A549 (cell line): ENCODE measurements at regions of chr10 and their contacts with region 1.

Region 1: DNA sequence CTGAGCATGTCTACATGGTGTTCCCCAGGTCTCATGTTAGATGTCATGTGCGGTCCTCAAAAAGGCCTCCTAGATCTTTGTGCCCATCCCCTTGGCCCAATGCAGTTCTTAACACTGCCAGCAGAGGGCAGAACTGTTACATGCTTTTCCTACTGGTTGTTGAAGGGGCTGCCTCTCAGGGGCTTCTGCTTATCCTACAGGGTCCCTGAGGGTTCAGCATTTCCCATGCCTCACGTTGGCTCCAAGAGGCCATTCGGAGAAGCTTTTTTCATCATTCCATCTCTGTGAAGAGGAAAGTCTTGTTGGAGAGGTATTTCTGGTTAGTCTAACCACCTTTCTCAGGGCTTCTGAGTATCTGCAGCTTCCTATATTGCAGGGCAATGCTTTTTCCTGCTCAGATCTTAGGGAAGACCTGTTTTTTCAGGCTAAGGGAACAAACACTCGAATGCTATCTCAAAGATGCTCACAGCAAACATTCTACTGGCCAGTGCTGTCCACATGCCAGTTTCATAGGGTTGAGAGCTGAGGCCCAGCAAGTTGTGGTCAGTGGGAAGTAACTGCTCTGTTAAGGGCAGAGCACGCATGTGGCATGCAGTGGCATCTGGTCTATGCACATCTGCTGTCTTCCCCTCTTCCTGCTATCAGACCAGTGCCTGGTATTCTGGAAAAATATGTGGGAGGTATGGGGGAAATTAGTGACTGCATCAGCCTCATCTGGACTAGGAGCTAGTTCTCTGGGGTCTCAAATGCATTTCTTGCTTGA is 31.5 kb downstream of the MBL2 start:
- DNase-seq: peak; percentile 37 to 44
- ATAC-seq: peak; percentile 72 to 86; a peak in 3 of 6 replicates
- H3K4me3 ChIP-seq: no peak overlapping the region
- H3K27ac ChIP-seq: no peak overlapping the region
- H3K4me1 ChIP-seq: no peaks in the 10 kb centered on the region
- CTCF ChIP-seq: peak; percentile 57
- EP300 ChIP-seq: no peak
- POLR2A ChIP-seq: no peak
- RAD21 ChIP-seq: peak; percentile 41 to 56; a peak in 3 of 5 replicates

Region 2: DNA sequence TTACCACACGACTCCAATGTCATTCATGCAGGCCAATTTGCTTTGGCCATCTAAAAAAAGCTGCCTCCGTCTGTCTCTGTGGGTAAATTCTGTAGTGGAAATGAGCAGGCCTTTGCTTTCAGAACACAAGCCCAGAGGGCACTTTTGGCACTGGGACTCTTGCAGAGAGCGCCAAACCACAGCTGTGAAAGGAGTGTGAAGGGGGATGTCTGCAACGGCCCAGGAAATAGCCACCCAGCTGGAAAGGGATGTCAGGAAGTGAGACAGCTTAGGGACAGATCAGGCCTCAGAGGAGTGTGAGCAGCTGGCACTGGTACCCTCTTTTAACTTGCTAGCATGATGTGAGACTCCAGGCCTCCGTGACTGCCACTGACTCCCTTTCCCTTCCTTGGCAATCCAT is 274.6 kb before region 1 on chr10:
- CTCF ChIA-PET with region 1: no interaction called
- POLR2A ChIA-PET with region 1: no interaction called
- DNase-seq: no peak
- ATAC-seq: no peak
- H3K4me3 ChIP-seq: no peak overlapping the region
- H3K27ac ChIP-seq: peak overlapping the region; percentile 4 to 61; a peak in 3 of 6 replicates
- H3K4me1 ChIP-seq: peaks cover 6% of the 10 kb centered on the region
- CTCF ChIP-seq: no peak
- EP300 ChIP-seq: no peak
- POLR2A ChIP-seq: no peak
- RAD21 ChIP-seq: no peak

Region 3: GRCh38 chr10:52755297-52756062 is 14.4 kb after region 1 on chr10:
- CTCF ChIA-PET with region 1: interaction called, 15 read pairs
- POLR2A ChIA-PET with region 1: no interaction called
- DNase-seq: no peak
- ATAC-seq: peak in 1 of 2 experiments; percentile 56; a peak in 1 of 6 replicates
- H3K4me3 ChIP-seq: no peak overlapping the region
- H3K27ac ChIP-seq: no peak overlapping the region
- H3K4me1 ChIP-seq: no peaks in the 10 kb centered on the region
- CTCF ChIP-seq: no peak
- EP300 ChIP-seq: no peak
- POLR2A ChIP-seq: no peak
- RAD21 ChIP-seq: no peak

Region 4: DNA sequence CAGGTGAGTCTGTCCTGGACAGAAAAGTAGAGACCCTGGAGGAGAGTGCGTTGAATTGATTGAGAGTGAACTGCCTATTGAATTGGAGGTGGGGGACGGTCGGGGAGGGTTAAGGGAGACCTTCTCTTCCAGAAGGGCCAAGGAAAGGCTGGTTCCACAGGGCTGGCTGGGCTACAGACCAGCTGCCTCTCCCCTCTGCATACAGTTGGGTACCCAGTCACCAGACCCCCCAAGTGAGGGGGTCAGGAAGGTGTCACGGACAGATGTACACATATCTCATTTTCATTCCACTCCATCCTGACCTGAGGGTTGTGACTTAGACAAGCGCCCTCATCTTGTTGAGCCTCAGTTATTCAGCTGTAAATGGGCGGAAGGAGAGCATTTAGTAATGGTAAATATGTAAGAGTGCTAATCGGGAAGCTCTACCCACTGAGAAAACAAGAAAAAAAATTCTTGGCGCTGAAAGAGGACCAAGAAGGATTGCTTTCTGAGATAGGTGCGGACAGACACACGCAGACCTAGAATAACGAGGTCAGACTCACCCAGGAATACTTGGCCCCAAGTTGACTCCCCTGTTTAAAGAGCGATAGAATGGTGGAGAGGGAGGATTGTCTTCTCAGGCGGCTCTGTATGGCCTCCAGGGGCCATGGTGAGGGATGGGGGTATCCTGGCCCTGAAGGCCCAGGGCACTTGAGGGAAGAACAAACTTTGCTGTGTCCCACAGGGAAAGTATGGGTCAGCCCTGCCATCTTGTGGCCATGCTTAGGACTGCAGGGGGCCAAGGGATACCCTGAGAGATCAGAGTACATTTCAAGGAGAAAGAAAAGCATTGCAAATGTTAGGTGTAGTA is 38.7 kb after region 1 on chr10:
- CTCF ChIA-PET with region 1: interaction called, 59 read pairs
- POLR2A ChIA-PET with region 1: no interaction called
- DNase-seq: peak; percentile 60 to 62
- ATAC-seq: peak; percentile 86 to 95
- H3K4me3 ChIP-seq: no peak overlapping the region
- H3K27ac ChIP-seq: no peak overlapping the region
- H3K4me1 ChIP-seq: no peaks in the 10 kb centered on the region
- CTCF ChIP-seq: peak; percentile 86
- EP300 ChIP-seq: no peak
- POLR2A ChIP-seq: no peak
- RAD21 ChIP-seq: peak; percentile 87 to 92